ENCODE measurements at regions of chr5 and their contacts with region 1.

Region 1: GRCh38 chr5:149913436-149914419 is 30.9 kb downstream of the PDE6A start:
- DNase-seq: no peak
- H3K4me3 ChIP-seq: no peak overlapping the region
- H3K27ac ChIP-seq: no peak overlapping the region
- H3K4me1 ChIP-seq: peaks cover 52% of the 10 kb centered on the region
- H3K27me3 ChIP-seq: no peaks in the 10 kb centered on the region
- CTCF ChIP-seq: no peak

Region 2: GRCh38 chr5:149887622-149888183 is 26.0 kb before region 1 on chr5:
- CTCF ChIA-PET with region 1: interaction called, 8 read pairs
- POLR2A ChIA-PET with region 1: interaction called, 3 read pairs
- intact Hi-C with region 1: loop called (anchors 2 kb)
- DNase-seq: peak; percentile 58 to 68
- H3K4me3 ChIP-seq: no peak overlapping the region
- H3K27ac ChIP-seq: no peak overlapping the region
- H3K4me1 ChIP-seq: peaks cover 3% of the 10 kb centered on the region; the same call in 1 of the 2 replicates
- H3K27me3 ChIP-seq: no peaks in the 10 kb centered on the region
- CTCF ChIP-seq: no peak

Region 3: DNA sequence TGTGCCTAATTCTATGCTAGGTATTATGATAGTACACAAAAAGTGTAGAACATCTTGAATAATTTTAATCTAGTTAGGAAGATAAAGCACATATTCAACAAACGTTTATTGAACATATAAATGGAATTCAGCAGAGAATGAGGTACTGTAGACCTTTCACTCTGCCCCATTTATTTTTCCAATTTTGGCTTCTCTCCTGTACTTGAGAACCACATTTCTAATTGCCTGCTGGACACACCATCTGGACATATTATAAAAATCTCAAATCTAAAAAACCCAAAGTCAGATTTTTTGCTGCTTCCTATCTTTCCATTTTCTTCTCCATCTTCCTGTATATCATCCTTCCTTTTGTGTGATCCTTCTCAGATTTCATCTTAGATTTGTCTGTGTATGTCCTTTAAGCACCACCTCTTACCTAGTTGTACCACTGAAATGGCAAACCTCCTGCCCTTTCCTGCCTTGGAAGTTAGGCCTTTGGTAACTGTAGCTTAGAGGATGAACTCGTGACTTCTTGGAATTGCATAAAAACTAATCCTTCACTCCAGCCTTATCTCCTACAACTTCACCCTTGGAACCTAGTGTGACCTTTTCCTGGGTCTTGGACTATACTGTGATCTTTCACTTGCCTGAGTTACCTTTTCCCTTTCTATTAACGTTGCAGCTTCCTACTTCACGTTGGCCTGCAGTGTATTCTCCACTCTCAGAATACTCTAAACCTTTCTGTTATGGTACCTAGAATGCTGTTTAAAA is 55.6 kb after region 1 on chr5:
- CTCF ChIA-PET with region 1: interaction called, 19 read pairs
- POLR2A ChIA-PET with region 1: no interaction called
- intact Hi-C with region 1: no loop called
- DNase-seq: no peak
- H3K4me3 ChIP-seq: no peak overlapping the region
- H3K27ac ChIP-seq: no peak overlapping the region
- H3K4me1 ChIP-seq: no peaks in the 10 kb centered on the region
- H3K27me3 ChIP-seq: no peaks in the 10 kb centered on the region
- CTCF ChIP-seq: no peak

Measured in PC-9 (cell line).